Activated CD4-positive, alpha-beta T cell treated with anti-CD3 and anti-CD28 coated beads, Interleukin-2, amount 10 ng/mL, durations not matched to agents 24 days and 14 days (primary cell): ENCODE measurements at regions of chr1 and their contacts with region 1.

Region 1: GRCh38 chr1:156767101-156767878 is at the start of gene PRCC:
- DNase-seq: peak; percentile 99
- H3K4me3 Mint-ChIP-seq: no peak within 1 kb of the TSS
- H3K27ac Mint-ChIP-seq: peak within 1 kb of the TSS; percentile 79
- H3K4me1 Mint-ChIP-seq: peaks cover 33% of the 10 kb centered on the region
- H3K27me3 Mint-ChIP-seq: no peaks in the 10 kb centered on the region
- total RNA-seq, gene PRCC: 106 and 120 TPM in 2 replicates

Region 2: GRCh38 chr1:156740679-156741612 is 26.3 kb before region 1 on chr1 and contains the start of gene MRPL24:
- intact Hi-C with region 1: loop called (anchors 1 kb)
- DNase-seq: peak; percentile 99
- H3K4me3 Mint-ChIP-seq: peak within 1 kb of the TSS; percentile 98
- H3K27ac Mint-ChIP-seq: peak within 1 kb of the TSS; percentile 96
- H3K4me1 Mint-ChIP-seq: peaks cover 25% of the 10 kb centered on the region
- H3K27me3 Mint-ChIP-seq: no peaks in the 10 kb centered on the region
- total RNA-seq, gene MRPL24: 134 and 135 TPM in 2 replicates